MCF 10A (cell line): ENCODE measurements at regions of chr4 and their contacts with region 1.

Region 1: DNA sequence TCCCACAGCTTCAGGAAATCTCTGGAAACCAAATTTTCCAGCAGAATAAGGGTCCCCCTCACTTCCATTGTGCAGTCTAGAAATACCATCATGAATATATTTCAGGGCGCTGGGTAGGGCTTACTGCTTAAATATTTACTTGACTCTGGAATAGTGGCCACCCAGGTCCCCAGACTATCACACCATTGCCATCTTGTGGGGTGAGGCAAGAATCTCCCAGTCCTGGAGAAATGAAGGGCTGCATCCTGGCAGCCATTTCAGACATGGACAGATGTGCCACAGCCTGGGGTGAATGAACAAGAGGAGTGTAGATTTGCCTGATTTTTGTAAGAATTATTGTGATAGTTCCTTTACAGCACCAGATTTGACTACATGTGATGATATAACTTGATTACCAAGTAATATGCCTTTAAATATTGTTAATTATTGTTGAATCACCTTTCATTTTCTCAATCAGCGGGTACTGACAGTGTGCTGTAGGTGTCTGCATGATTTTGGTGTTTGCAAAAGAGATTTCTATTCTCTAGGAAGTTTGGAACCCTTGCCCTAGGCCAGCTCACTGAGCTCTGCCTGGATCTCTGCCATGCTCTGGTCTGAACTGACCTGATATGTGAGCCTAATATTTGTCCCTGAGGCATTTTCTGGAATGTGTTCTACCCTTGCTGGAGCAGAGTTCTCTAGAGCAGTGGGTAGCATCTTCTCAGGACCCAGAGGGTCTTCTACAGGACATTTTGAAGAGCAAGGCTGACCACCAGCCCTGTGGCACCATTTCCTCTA is 183.4 kb downstream of the KIT start:
- DNase-seq: peak; percentile 25
- H3K4me3 Mint-ChIP-seq: no peak overlapping the region
- H3K27ac Mint-ChIP-seq: no peak overlapping the region
- H3K4me1 Mint-ChIP-seq: no peaks in the 10 kb centered on the region
- H3K27me3 Mint-ChIP-seq: no peaks in the 10 kb centered on the region
- CTCF ChIP-seq: no peak

Region 2: DNA sequence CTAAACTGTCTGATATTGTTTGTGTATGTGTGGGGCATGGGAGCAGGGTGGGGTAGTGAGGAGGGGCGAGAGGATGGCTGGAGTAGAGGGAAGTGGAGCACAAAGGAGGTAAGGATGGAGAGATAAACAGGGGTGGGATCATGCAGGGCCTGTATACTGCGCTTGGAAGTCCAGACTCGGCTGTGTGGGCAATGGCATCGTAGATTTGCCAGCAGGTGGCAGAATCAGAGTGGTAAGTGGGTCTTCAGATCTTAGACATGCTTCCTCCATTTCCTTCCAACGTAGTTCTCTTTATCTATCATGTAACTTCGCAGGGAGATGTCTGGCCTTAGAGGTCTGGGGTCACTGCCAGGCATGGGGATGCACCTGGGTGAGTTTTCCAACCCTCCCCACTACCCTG is 456.6 kb before region 1 on chr4:
- CTCF ChIA-PET with region 1: interaction called, 3 read pairs
- POLR2A ChIA-PET with region 1: no interaction called
- intact Hi-C with region 1: loop called (anchors 2 kb)
- DNase-seq: peak; percentile 47
- H3K4me3 Mint-ChIP-seq: no peak overlapping the region
- H3K27ac Mint-ChIP-seq: no peak overlapping the region
- H3K4me1 Mint-ChIP-seq: peaks cover 4% of the 10 kb centered on the region
- H3K27me3 Mint-ChIP-seq: no peaks in the 10 kb centered on the region
- CTCF ChIP-seq: peak; percentile 44

Region 3: DNA sequence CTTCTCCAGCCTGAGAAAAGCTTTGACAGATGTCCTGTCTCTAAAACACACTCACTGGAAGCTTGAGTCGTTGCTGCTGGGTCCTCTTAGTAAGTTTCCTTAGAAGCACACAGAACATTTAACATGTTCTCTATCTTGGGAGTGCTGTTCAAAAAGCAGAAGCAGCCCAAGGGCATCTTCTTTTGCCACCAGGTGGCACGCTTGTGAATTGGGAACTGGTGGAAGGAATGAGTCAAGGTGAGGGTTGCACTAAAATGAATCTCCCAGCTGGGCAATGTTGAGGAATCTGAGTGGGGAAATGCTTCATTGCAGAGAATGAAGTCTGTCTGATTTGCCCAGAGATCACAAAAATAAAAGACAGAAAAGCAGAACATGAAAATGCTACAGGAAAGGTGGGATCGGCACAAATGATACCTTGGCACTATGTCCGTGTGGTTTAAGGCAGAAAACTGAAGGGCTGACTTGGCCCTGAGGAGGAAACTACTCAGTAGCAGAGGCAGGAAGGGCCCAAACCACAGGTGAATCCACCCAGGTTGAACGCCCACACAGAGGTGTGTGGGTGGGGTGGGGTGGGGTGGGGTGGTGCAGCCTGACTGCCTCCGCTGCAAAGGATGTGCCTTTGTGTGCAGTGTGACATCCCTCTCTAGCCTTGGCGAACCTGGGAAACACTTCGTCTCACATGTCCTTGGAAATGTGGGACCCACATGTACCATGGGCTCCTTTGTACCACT is 157.4 kb before region 1 on chr4:
- CTCF ChIA-PET with region 1: interaction called, 6 read pairs
- POLR2A ChIA-PET with region 1: no interaction called
- intact Hi-C with region 1: loop called (anchors 10 kb)
- DNase-seq: peak; percentile 72
- H3K4me3 Mint-ChIP-seq: no peak overlapping the region
- H3K27ac Mint-ChIP-seq: no peak overlapping the region
- H3K4me1 Mint-ChIP-seq: peaks cover 5% of the 10 kb centered on the region
- H3K27me3 Mint-ChIP-seq: no peaks in the 10 kb centered on the region
- CTCF ChIP-seq: no peak

Region 4: GRCh38 chr4:55169352-55169961 is 328.3 kb after region 1 on chr4:
- CTCF ChIA-PET with region 1: no interaction called
- POLR2A ChIA-PET with region 1: no interaction called
- intact Hi-C with region 1: no loop called
- DNase-seq: peak; percentile 47
- H3K4me3 Mint-ChIP-seq: no peak overlapping the region
- H3K27ac Mint-ChIP-seq: no peak overlapping the region
- H3K4me1 Mint-ChIP-seq: peaks cover 18% of the 10 kb centered on the region
- H3K27me3 Mint-ChIP-seq: no peaks in the 10 kb centered on the region
- CTCF ChIP-seq: no peak